PC-3 (cell line): ENCODE measurements at regions of chrX and their contacts with region 1.

Region 1: DNA sequence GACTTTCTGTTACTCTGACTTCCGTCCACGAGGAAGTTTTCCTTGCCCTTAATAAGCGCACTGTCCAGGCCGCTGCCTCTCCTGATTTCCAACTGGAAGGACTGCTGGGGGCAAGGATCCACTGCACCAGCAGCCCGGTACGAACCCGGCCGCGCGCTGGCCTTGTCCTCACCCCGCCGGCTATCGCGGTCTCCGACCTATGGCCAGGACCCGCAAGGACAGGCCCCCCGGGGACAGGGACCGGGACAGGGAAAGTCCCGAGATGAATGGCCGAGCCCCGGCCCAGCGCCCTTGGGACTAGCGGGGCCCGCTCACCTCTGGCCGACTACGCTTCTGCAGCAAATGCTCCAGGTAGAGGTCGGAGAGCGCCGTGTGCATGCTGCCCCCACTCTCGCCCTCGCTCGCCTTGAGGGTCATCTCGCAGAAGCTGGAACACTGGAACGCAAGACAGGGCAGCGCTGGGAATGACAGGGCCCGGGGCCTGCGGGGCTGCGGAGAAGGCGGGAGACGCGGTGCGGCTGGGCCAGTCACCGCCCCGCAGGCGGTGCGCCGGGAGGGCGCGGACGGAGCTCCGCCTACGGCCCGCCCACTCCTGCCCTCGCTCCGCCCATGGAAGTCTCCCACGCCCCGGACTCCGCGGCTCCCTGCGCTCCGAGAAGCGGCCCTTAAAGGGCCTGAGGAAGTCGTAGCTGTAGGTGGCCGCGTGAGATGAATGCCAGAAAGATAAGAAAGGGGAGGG is at the start of gene MPP1:
- DNase-seq: peak; percentile 86
- ATAC-seq: peak; percentile 97
- H3K4me3 ChIP-seq: peak within 1 kb of the TSS; percentile 92
- H3K27ac ChIP-seq: no peak within 1 kb of the TSS
- H3K4me1 ChIP-seq: peaks cover 33% of the 10 kb centered on the region
- H3K27me3 ChIP-seq: no peaks in the 10 kb centered on the region
- CTCF ChIP-seq: no peak
- total RNA-seq, gene MPP1: 18.3 and 18.8 TPM in 2 replicates

Region 2: GRCh38 chrX:154717824-154718223 is 87.3 kb before region 1 on chrX:
- CTCF ChIA-PET with region 1: no interaction called
- POLR2A ChIA-PET with region 1: no interaction called
- intact Hi-C with region 1: no loop called
- DNase-seq: peak; percentile 70
- ATAC-seq: no peak
- H3K4me3 ChIP-seq: no peak overlapping the region
- H3K27ac ChIP-seq: peak overlapping the region; percentile 95
- H3K4me1 ChIP-seq: peaks cover 33% of the 10 kb centered on the region
- H3K27me3 ChIP-seq: no peaks in the 10 kb centered on the region
- CTCF ChIP-seq: peak; percentile 39; the same call in 1 of the 2 replicates

Region 3: GRCh38 chrX:154762523-154763289 is 42.4 kb before region 1 on chrX and contains the start of gene DKC1:
- CTCF ChIA-PET with region 1: no interaction called
- POLR2A ChIA-PET with region 1: no interaction called
- intact Hi-C with region 1: loop called (anchors 5 kb)
- DNase-seq: peak; percentile 98
- ATAC-seq: peak; percentile 91
- H3K4me3 ChIP-seq: peak within 1 kb of the TSS; percentile 93
- H3K27ac ChIP-seq: peak within 1 kb of the TSS; percentile 60
- H3K4me1 ChIP-seq: peaks cover 8% of the 10 kb centered on the region
- H3K27me3 ChIP-seq: no peaks in the 10 kb centered on the region
- CTCF ChIP-seq: no peak
- total RNA-seq, gene DKC1: 89.2 and 115 TPM in 2 replicates